GM12878 (cell line): ENCODE measurements at regions of chr1 and their contacts with region 1.

Region 1: DNA sequence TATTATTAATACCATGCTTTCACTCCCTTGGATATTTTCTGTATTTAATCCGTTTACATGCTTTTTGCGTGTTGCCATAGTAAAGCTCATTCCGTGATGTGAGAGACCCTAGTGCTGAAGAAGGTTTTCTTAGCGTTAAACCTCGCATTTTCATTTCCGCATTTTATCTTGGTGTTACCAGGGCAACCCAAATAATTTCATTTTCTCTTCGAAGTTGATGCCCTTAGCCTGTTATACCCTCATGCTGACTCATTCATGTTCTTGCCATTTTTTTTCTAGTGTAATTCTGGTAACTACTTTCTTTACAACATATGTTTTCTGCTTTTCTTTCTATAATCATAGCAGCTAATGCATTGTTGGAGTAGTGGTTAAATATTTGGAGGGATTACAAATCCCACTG is 37.2 kb downstream of the LRRC8C start:
- DNase-seq: peak; percentile 94
- ATAC-seq: peak; percentile 93
- H3K4me3 ChIP-seq: no peak overlapping the region; the same call in 1 of the 2 replicates
- H3K27ac ChIP-seq: peak overlapping the region; percentile 72
- H3K4me1 ChIP-seq: peaks cover 37% of the 10 kb centered on the region
- H3K27me3 ChIP-seq: no peaks in the 10 kb centered on the region
- CTCF ChIP-seq: no peak
- EP300 ChIP-seq: peak; percentile 98
- POLR2A ChIP-seq: no peak
- RAD21 ChIP-seq: no peak

Region 2: DNA sequence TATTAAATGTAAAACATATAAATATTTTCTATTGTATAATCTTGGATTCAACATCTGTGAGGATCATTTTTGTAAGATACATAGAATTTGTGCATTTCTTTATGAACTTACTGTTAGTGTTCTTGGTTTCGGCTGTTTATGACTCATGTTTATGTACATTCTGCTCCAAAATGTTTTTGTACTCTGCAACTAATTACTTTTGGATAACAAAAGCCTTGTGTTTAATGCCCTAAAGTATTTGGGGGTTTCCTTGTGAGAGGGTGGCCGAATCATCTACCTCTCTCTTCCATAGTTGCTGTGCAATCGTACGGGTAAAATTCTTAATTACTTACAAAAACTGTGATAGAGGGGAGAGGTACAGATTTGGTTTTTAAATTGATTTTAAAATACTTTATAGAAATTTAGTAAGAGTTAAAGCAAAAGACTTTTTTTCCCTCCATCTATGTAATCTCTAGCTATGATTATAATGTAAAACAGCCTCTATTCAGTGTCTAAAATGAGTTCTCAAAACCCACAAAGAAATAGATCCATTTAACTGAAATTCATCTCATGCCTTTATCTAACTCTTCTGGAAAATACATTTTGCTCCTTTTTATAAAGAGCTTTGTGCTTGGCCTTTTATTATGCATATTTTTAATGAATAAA is 75.9 kb before region 1 on chr1:
- CTCF ChIA-PET with region 1: no interaction called
- POLR2A ChIA-PET with region 1: no interaction called
- RAD21 ChIA-PET with region 1: no interaction called
- SMC1A ChIA-PET with region 1: no interaction called
- in situ Hi-C with region 1: no loop called
- intact Hi-C with region 1: no loop called
- DNase-seq: no peak
- ATAC-seq: no peak
- H3K4me3 ChIP-seq: no peak overlapping the region
- H3K27ac ChIP-seq: no peak overlapping the region
- H3K4me1 ChIP-seq: peaks cover 5% of the 10 kb centered on the region
- H3K27me3 ChIP-seq: no peaks in the 10 kb centered on the region
- CTCF ChIP-seq: no peak
- EP300 ChIP-seq: no peak
- POLR2A ChIP-seq: no peak
- RAD21 ChIP-seq: no peak

Region 3: GRCh38 chr1:89649783-89650182 is 20.4 kb before region 1 on chr1:
- CTCF ChIA-PET with region 1: interaction called, 68 read pairs
- POLR2A ChIA-PET with region 1: interaction called, 57 read pairs
- RAD21 ChIA-PET with region 1: interaction called, 10 read pairs
- SMC1A ChIA-PET with region 1: interaction called, 353 read pairs
- in situ Hi-C with region 1: no loop called
- intact Hi-C with region 1: no loop called
- DNase-seq: no peak
- ATAC-seq: peak; percentile 69
- H3K4me3 ChIP-seq: no peak overlapping the region
- H3K27ac ChIP-seq: no peak overlapping the region
- H3K4me1 ChIP-seq: peaks cover 12% of the 10 kb centered on the region
- H3K27me3 ChIP-seq: no peaks in the 10 kb centered on the region
- CTCF ChIP-seq: no peak
- EP300 ChIP-seq: no peak
- POLR2A ChIP-seq: no peak
- RAD21 ChIP-seq: no peak

Region 4: DNA sequence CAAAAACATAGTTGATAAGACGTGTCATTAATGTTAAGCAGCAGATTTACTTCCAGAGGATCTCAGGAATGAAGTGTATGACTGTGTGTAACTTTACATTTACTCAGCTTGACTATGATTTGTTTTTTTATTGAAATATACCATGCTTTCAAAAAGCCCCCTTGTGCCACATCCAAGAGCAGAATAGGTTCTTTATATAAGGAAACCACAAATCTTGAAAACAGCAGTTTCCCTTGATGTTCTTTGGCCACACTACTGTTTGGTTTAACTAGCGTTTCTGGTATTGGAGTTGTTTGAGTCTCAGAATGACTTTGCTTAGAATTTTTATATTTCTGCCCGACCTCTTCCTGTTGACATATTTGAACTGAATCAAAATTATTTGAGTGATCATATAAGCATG is 12.3 kb before region 1 on chr1:
- CTCF ChIA-PET with region 1: interaction called, 68 read pairs
- POLR2A ChIA-PET with region 1: interaction called, 57 read pairs
- RAD21 ChIA-PET with region 1: interaction called, 76 read pairs
- SMC1A ChIA-PET with region 1: interaction called, 353 read pairs
- in situ Hi-C with region 1: no loop called
- intact Hi-C with region 1: no loop called
- DNase-seq: peak; percentile 76
- ATAC-seq: peak; percentile 84
- H3K4me3 ChIP-seq: no peak overlapping the region
- H3K27ac ChIP-seq: peak overlapping the region; percentile 35
- H3K4me1 ChIP-seq: peaks cover 23% of the 10 kb centered on the region
- H3K27me3 ChIP-seq: no peaks in the 10 kb centered on the region
- CTCF ChIP-seq: no peak
- EP300 ChIP-seq: peak in 1 of 2 experiments; percentile 57; a peak in 1 of 4 replicates
- POLR2A ChIP-seq: no peak
- RAD21 ChIP-seq: no peak

Region 5: GRCh38 chr1:89681045-89681729 is 11.0 kb after region 1 on chr1:
- CTCF ChIA-PET with region 1: interaction called, 18 read pairs
- POLR2A ChIA-PET with region 1: interaction called, 4 read pairs
- RAD21 ChIA-PET with region 1: interaction called, 7 read pairs
- SMC1A ChIA-PET with region 1: interaction called, 12 read pairs
- in situ Hi-C with region 1: no loop called
- intact Hi-C with region 1: no loop called
- DNase-seq: peak; percentile 57
- ATAC-seq: peak; percentile 91
- H3K4me3 ChIP-seq: no peak overlapping the region
- H3K27ac ChIP-seq: peak overlapping the region; percentile 49
- H3K4me1 ChIP-seq: peaks cover 5% of the 10 kb centered on the region; the same call in 1 of the 2 replicates
- H3K27me3 ChIP-seq: no peaks in the 10 kb centered on the region
- CTCF ChIP-seq: no peak
- EP300 ChIP-seq: peak; percentile 62 to 96; a peak in 3 of 4 replicates
- POLR2A ChIP-seq: no peak
- RAD21 ChIP-seq: no peak

Region 6: DNA sequence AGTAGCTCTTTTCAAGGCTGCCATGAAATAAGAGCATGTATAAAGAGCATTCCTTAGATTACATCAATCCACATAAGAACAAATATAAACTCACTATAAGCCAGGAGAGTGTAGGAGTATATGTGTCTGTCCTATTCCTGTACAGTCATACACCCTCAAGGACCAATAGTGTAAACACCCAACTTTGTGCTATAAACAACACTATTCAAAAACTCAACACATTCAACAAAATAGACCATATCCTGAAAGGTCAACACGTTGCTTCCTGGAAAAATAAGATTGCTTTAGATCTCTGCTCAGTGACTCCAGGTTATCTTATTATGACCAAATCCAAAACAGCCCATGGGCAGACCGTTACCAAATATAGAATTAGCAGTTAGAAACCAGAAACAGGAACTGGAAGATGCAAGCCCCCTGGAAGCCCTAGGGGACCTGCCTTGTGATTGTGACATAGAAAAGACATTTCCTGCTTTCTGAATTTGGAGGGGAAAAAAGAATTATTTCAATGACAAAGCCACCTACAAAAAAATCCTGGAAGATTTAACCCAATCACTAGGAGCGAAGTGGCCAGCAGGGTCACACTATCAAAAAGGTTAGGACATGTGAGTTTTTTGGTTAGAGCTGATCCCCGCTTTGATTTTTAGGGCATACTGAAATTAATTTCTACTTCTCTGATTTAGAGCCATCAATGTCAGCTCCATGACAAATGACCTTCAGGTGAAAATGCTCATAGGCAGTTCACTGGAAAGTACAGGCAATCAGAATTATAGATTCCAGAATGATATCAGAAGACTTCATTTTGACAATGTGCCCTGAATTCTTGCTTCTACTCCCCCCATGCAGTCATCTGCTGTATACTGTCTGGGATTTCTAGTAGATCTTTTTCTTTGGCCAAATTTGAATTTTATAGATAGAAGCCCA is 22.7 kb after region 1 on chr1:
- CTCF ChIA-PET with region 1: interaction called, 3 read pairs
- POLR2A ChIA-PET with region 1: interaction called, 14 read pairs
- RAD21 ChIA-PET with region 1: interaction called, 17 read pairs
- SMC1A ChIA-PET with region 1: interaction called, 70 read pairs
- in situ Hi-C with region 1: no loop called
- intact Hi-C with region 1: no loop called
- DNase-seq: peak; percentile 52
- ATAC-seq: peak; percentile 83
- H3K4me3 ChIP-seq: peak overlapping the region; percentile 55; the same call in 1 of the 2 replicates
- H3K27ac ChIP-seq: peak overlapping the region; percentile 86
- H3K4me1 ChIP-seq: peaks cover 24% of the 10 kb centered on the region
- H3K27me3 ChIP-seq: no peaks in the 10 kb centered on the region
- CTCF ChIP-seq: no peak
- EP300 ChIP-seq: peak; percentile 89 to 91
- POLR2A ChIP-seq: no peak
- RAD21 ChIP-seq: no peak

Region 7: GRCh38 chr1:89698624-89699023 is 28.5 kb after region 1 on chr1:
- CTCF ChIA-PET with region 1: interaction called, 5 read pairs
- POLR2A ChIA-PET with region 1: interaction called, 14 read pairs
- RAD21 ChIA-PET with region 1: interaction called, 17 read pairs
- SMC1A ChIA-PET with region 1: interaction called, 70 read pairs
- in situ Hi-C with region 1: no loop called
- intact Hi-C with region 1: no loop called
- DNase-seq: no peak
- ATAC-seq: no peak
- H3K4me3 ChIP-seq: no peak overlapping the region
- H3K27ac ChIP-seq: no peak overlapping the region; the same call in 1 of the 2 replicates
- H3K4me1 ChIP-seq: peaks cover 22% of the 10 kb centered on the region
- H3K27me3 ChIP-seq: no peaks in the 10 kb centered on the region
- CTCF ChIP-seq: no peak
- EP300 ChIP-seq: no peak
- POLR2A ChIP-seq: no peak
- RAD21 ChIP-seq: no peak

Region 8: GRCh38 chr1:89706700-89707012 is 36.5 kb after region 1 on chr1:
- CTCF ChIA-PET with region 1: interaction called, 5 read pairs
- POLR2A ChIA-PET with region 1: no interaction called
- RAD21 ChIA-PET with region 1: interaction called, 12 read pairs
- SMC1A ChIA-PET with region 1: interaction called, 5 read pairs
- in situ Hi-C with region 1: no loop called
- intact Hi-C with region 1: no loop called
- DNase-seq: no peak
- ATAC-seq: peak; percentile 51
- H3K4me3 ChIP-seq: peak overlapping the region; percentile 1; the same call in 1 of the 2 replicates
- H3K27ac ChIP-seq: peak overlapping the region; percentile 37
- H3K4me1 ChIP-seq: peaks cover 21% of the 10 kb centered on the region
- H3K27me3 ChIP-seq: no peaks in the 10 kb centered on the region
- CTCF ChIP-seq: no peak
- EP300 ChIP-seq: no peak
- POLR2A ChIP-seq: no peak
- RAD21 ChIP-seq: no peak

Region 9: GRCh38 chr1:90262791-90263190 is 592.6 kb after region 1 on chr1:
- CTCF ChIA-PET with region 1: no interaction called
- POLR2A ChIA-PET with region 1: no interaction called
- RAD21 ChIA-PET with region 1: no interaction called
- SMC1A ChIA-PET with region 1: no interaction called
- in situ Hi-C with region 1: no loop called
- intact Hi-C with region 1: no loop called
- DNase-seq: no peak
- ATAC-seq: no peak
- H3K4me3 ChIP-seq: no peak overlapping the region
- H3K27ac ChIP-seq: no peak overlapping the region
- H3K4me1 ChIP-seq: no peaks in the 10 kb centered on the region
- H3K27me3 ChIP-seq: no peaks in the 10 kb centered on the region; a peak in 1 of 4 replicates
- CTCF ChIP-seq: no peak
- EP300 ChIP-seq: no peak
- POLR2A ChIP-seq: no peak
- RAD21 ChIP-seq: no peak